ENCODE measurements at regions of chr11 and their contacts with region 1.

Region 1: DNA sequence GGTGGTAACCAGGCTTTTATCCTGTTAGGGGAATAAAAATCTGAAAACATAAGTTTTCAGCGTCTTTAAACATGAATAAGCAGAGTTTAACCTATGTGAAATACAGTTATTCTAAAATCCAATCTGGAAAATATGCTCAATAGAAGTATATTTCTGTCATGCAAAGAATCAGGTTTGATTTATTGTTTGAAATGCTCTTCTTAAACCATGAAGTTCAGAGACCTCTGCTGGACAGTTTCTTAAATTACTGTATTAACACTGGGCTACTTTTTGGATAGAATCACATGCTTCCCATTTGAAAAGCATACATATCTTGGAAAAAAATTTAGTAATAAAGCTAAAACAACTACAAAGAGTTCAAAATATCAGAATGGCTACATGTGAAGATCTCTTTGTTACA is 25.4 kb downstream of the APIP start:
- DNase-seq: no peak
- H3K4me3 ChIP-seq: no peak overlapping the region
- H3K4me3 Mint-ChIP-seq: no peak overlapping the region
- H3K27ac ChIP-seq: no peak overlapping the region
- H3K27ac Mint-ChIP-seq: no peak overlapping the region
- H3K4me1 ChIP-seq: no peaks in the 10 kb centered on the region
- H3K4me1 Mint-ChIP-seq: peaks cover 0 to 4% (median 0%) of the 10 kb centered on the region in 3 donors
- H3K27me3 ChIP-seq: no peaks in the 10 kb centered on the region
- H3K27me3 Mint-ChIP-seq: peaks cover 0 to 3% of the 10 kb centered on the region in 2 donors

Region 2: DNA sequence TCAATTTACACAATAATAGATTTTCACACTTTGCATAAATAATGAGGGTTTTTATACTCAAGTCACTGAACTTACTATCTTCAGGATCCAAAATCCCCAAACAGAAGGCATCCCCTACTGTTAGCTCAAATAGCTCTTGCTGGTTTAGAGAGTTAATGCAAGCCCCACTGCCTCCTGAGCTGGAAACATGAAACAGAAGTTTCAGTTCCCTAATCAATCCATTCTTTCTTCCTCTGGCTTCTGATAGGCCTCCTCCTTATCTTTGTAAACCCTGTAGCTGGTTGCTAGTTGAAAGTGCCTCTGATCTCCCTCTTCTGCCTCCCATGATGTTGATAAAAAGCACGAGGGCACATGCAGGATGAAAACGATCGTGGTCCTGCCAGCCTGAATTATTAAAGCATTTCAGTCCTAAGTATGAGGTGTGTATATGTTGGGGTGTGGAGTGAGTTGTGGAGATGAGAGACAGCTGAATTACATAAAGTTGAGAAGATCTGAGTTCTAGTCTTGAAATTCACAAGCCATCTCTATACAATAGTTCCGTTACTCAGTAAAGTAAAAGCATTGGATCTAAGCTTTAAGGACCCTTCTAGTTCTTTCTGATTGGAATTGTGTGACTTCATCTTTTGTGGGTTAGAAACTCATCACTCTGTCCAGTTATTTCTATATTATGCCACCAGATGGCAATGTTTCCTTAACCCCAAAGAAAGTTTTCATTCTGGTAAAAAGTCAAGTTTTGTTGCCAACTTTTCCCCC is 304.9 kb before region 1 on chr11:
- CTCF ChIA-PET with region 1: interaction called, 17 read pairs
- POLR2A ChIA-PET with region 1: no interaction called
- DNase-seq: peak in 2 of 5 donors; percentile 23 to 25
- H3K4me3 ChIP-seq: no peak overlapping the region
- H3K4me3 Mint-ChIP-seq: no peak overlapping the region
- H3K27ac ChIP-seq: no peak overlapping the region
- H3K27ac Mint-ChIP-seq: no peak overlapping the region
- H3K4me1 ChIP-seq: no peaks in the 10 kb centered on the region
- H3K4me1 Mint-ChIP-seq: no peaks in the 10 kb centered on the region
- H3K27me3 ChIP-seq: no peaks in the 10 kb centered on the region
- H3K27me3 Mint-ChIP-seq: peaks cover 13 to 33% of the 10 kb centered on the region in 2 donors

Measured in CD8-positive, alpha-beta memory T cell (primary cell).